IMR-90 (cell line): ENCODE measurements at regions of chr10 and their contacts with region 1.

Region 1: DNA sequence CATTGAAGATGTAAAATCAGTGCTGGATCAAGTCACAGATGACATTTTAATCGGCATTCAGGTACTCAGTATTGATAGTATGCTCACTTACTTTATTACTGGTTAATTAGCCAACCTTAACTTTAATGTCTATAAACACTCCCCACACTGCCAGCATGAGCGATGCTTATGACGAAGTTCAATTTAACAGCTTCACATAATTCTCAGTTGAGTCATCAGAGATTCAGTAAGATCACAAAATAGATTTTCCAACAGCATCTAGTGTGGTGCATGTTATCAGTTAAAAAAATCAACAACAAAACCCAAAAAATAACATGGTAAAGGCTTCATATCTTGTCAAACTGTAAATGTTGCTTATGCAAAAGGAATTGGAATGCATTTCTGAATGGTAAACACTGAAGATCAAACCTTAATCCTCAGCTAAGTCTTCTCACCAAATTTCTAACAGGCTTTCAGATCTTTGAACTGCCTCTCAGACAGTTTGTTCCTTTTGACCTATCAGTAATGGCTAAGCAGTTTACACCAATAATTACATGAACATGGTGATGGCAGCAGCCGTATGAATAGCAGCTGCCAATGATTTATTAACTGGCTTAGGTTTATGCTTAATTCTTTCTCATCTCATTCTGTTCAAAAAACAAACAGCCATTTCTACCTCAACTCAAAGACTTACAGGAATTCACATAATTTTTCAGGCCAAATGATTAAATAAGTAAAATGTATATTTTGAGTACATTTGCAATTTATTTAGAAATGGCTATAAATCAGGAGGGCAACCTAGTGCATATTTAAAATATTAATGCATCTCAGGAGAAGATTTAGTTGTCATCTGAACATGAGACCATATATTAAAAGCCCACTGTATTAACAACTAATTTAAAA is 98.5 kb downstream of the CABCOCO1 start:
- DNase-seq: peak; percentile 87
- ATAC-seq: peak; percentile 88
- H3K4me3 ChIP-seq: no peak overlapping the region
- H3K27ac ChIP-seq: peak overlapping the region; percentile 28; the same call in 1 of the 2 replicates
- H3K4me1 ChIP-seq: peaks cover 11% of the 10 kb centered on the region
- H3K27me3 ChIP-seq: no peaks in the 10 kb centered on the region
- CTCF ChIP-seq: no peak
- POLR2A ChIP-seq: no peak
- RAD21 ChIP-seq: no peak

Region 2: DNA sequence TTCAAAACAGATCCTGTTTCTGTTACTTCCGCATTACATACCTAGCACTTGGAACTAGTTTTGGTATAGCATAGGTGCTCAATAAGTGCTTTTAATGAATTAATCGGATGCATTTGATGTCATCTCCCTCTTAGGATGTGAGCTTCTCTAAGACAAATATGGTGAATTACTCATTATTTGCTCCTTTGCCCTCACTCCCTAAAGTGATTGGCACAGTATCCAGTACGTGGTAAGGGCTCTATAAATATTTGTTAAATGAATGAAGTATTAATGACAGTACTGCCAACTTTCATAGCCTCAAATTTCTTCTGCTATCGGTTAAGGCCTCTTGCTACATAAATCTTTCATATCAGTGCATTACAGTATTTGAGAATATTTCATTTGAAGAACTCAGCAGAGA is 64.4 kb after region 1 on chr10:
- CTCF ChIA-PET with region 1: interaction called, 3 read pairs
- POLR2A ChIA-PET with region 1: no interaction called
- dilution Hi-C with region 1: no loop called
- in situ Hi-C with region 1: no loop called
- intact Hi-C with region 1: loop called (anchors 5 kb)
- DNase-seq: no peak
- ATAC-seq: no peak
- H3K4me3 ChIP-seq: no peak overlapping the region
- H3K27ac ChIP-seq: no peak overlapping the region
- H3K4me1 ChIP-seq: peaks cover 2% of the 10 kb centered on the region
- H3K27me3 ChIP-seq: no peaks in the 10 kb centered on the region
- CTCF ChIP-seq: no peak
- POLR2A ChIP-seq: no peak
- RAD21 ChIP-seq: no peak

Region 3: GRCh38 chr10:62098278-62099121 is 337.3 kb after region 1 on chr10:
- CTCF ChIA-PET with region 1: no interaction called
- POLR2A ChIA-PET with region 1: no interaction called
- dilution Hi-C with region 1: no loop called
- in situ Hi-C with region 1: no loop called
- intact Hi-C with region 1: no loop called
- DNase-seq: peak; percentile 60
- ATAC-seq: no peak
- H3K4me3 ChIP-seq: no peak overlapping the region
- H3K27ac ChIP-seq: peak overlapping the region; percentile 99; the same call in 1 of the 2 replicates
- H3K4me1 ChIP-seq: peaks cover 19% of the 10 kb centered on the region
- H3K27me3 ChIP-seq: no peaks in the 10 kb centered on the region
- CTCF ChIP-seq: no peak
- POLR2A ChIP-seq: 0 out of 2 replicates have a peak, but pooled peaks have one; percentile 5
- RAD21 ChIP-seq: no peak